AG04450 (cell line): ENCODE measurements at regions of chr6 and their contacts with region 1.

Region 1: GRCh38 chr6:82270881-82271645 is 23.5 kb upstream of the IBTK start:
- DNase-seq: no peak
- H3K4me3 ChIP-seq: no peak overlapping the region
- H3K27ac ChIP-seq: no peak overlapping the region
- H3K27me3 ChIP-seq: no peaks in the 10 kb centered on the region
- CTCF ChIP-seq: peak; percentile 61

Region 2: DNA sequence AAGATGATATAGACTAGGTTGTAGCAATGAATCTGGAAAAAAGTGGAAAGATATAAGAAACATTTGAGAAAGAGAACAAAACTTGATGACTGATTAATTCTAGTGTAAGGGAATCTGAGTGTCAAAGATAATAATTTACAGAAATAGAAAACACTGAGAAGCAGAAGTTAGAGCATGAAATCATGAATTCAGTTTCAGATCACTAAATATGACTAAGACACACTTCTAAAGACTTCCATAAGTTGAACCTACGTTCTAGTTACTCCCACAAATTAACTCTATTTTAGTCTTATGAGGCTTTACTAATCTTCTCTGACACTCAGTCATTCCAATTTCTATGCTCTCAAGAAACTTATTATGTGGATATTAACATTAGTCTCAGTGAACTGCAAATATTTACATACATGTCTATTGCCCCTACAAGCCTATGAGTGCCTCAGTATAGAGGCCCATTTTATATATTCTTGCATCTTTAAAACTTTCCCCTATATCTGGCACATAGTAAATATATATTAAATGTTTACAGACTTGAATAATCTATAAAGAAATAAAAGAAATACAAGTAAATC is 54.0 kb before region 1 on chr6:
- CTCF ChIA-PET with region 1: no interaction called
- POLR2A ChIA-PET with region 1: no interaction called
- DNase-seq: no peak
- H3K4me3 ChIP-seq: no peak overlapping the region
- H3K27ac ChIP-seq: no peak overlapping the region
- H3K27me3 ChIP-seq: no peaks in the 10 kb centered on the region
- CTCF ChIP-seq: no peak

Region 3: GRCh38 chr6:82616386-82617028 is 345.4 kb after region 1 on chr6:
- CTCF ChIA-PET with region 1: interaction called, 19 read pairs
- POLR2A ChIA-PET with region 1: no interaction called
- DNase-seq: no peak
- H3K4me3 ChIP-seq: no peak overlapping the region
- H3K27ac ChIP-seq: no peak overlapping the region
- H3K27me3 ChIP-seq: no peaks in the 10 kb centered on the region
- CTCF ChIP-seq: peak; percentile 15; the same call in 1 of the 2 replicates

Region 4: DNA sequence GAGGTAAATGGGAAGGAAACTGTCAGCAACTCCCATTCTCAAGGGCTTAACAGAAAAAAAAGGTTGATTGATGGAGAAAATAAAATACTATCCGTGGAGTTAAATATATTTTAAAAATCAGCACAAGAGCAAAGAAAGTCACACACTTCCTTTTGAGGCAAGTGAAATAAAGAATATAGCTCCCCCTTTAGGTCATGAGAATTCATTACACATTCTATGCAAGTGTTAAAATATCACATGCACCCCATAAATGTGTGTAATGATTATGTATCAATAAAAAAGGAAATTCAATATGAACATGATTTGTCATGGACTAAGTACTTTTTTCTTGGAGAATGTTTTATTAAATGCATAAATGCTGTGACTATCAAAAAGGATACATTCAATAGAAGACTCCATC is 441.8 kb after region 1 on chr6:
- CTCF ChIA-PET with region 1: interaction called, 15 read pairs
- POLR2A ChIA-PET with region 1: no interaction called
- DNase-seq: no peak
- H3K4me3 ChIP-seq: no peak overlapping the region
- H3K27ac ChIP-seq: no peak overlapping the region
- H3K27me3 ChIP-seq: no peaks in the 10 kb centered on the region
- CTCF ChIP-seq: peak; percentile 39; the same call in 1 of the 2 replicates

Region 5: GRCh38 chr6:82836007-82836575 is 565.0 kb after region 1 on chr6:
- CTCF ChIA-PET with region 1: interaction called, 11 read pairs
- POLR2A ChIA-PET with region 1: no interaction called
- DNase-seq: no peak
- H3K4me3 ChIP-seq: no peak overlapping the region
- H3K27ac ChIP-seq: no peak overlapping the region
- H3K27me3 ChIP-seq: peaks cover 2% of the 10 kb centered on the region
- CTCF ChIP-seq: no peak

Region 6: DNA sequence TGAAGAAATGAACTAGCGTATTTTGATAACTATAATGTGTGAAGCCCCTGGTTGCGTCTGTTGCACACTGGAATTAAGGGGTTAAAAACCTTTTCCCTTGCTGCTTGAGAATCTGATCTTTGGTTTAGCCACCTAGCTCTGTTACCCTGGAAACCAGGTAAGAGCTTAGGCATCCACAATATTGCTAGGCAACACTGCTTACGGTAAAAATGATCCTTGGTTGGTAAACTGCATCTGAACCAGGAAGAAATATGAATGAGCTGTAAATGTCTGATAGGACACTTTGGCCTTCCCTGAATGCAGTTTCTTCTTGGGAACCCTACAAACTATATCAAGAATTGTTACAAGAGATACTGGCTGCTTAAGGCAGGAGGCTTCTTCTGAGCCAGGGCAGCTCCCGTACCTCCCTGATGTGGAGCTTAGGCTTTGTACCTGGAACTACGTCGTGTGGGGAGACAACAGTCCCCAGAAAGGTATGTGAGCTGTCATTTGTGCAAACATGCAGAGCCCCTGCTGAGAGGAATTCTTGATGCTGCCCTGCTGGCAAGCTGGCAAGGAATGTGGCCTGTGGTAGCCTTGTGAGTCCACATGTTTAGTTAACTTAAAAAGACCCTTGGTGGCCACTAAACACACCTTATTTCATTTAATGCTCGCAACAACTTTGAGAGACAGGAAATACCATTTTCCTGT is 776.1 kb after region 1 on chr6:
- CTCF ChIA-PET with region 1: interaction called, 49 read pairs
- POLR2A ChIA-PET with region 1: no interaction called
- DNase-seq: no peak
- H3K4me3 ChIP-seq: no peak overlapping the region
- H3K27ac ChIP-seq: no peak overlapping the region
- H3K27me3 ChIP-seq: no peaks in the 10 kb centered on the region
- CTCF ChIP-seq: no peak

Region 7: DNA sequence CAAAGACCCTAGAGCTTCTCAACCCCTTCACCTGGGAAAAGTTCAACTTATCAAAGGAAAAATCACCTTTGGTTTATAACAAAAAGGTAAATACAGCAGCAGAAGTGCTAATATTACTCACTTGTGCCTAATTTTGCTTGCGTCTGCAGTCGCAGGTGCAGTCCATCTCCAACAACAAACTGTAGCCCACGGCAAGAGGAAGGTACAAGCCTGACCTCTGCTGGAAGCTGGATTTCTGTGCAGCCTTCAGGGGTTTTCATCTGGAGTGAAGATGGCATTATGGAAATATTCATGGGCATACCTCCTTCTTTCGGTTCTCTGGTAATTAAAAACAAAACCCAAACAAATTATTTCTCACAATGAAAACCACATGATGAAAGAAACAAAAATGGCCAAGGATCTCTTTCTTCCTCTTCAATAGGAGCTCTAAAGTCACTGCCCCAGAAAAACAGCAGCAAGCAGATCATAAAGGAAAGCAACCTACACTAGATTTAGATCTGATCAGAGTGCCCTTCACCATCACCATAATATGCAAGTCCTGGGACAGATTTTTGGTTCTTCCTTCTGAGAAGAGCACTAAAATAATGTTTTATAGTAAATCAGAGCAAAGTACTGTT is 786.8 kb after region 1 on chr6:
- CTCF ChIA-PET with region 1: interaction called, 51 read pairs
- POLR2A ChIA-PET with region 1: interaction called, 6 read pairs
- DNase-seq: no peak
- H3K4me3 ChIP-seq: no peak overlapping the region
- H3K27ac ChIP-seq: no peak overlapping the region
- H3K27me3 ChIP-seq: no peaks in the 10 kb centered on the region
- CTCF ChIP-seq: peak; percentile 91